ENCODE measurements at regions of chr16 and their contacts with region 1.

Region 1: DNA sequence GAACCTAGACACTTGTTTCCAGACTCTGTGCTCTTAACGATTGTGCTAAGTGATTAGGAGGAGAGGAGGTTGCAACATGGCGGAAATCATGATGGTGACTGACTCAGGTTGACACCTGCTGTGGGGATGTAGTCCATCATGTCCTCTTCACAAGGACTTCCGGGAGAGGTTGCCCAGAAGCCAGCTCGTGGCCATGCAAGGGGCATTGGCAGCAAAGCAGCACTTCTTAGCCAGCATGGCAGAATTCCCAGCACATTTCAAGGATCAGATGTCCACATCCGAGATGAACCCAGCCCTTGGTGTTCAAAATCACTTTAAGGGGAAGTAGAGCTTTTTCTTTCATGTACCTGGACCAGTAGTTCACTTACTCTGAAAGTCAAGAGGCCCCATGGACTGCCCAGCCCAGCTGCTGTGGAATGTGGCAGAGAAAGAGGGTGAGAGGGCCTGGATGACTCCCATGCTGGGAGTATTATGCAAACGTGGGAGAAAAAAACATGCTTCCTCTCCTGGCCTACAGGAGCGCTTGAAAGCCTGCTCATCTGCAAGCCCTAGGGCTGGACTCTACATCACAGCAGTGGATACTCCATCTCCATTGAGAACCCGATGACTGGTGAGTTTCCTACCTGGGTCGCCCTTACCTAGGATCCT is 65.5 kb downstream of the IRX6 start:
- DNase-seq: peak in 1 of 2 donors; percentile 37
- H3K4me3 ChIP-seq: no peak overlapping the region
- H3K27ac ChIP-seq: no peak overlapping the region
- H3K4me1 ChIP-seq: no peaks in the 10 kb centered on the region
- H3K27me3 ChIP-seq: no peaks in the 10 kb centered on the region
- CTCF ChIP-seq: no peak
- POLR2A ChIP-seq: no peak

Region 2: DNA sequence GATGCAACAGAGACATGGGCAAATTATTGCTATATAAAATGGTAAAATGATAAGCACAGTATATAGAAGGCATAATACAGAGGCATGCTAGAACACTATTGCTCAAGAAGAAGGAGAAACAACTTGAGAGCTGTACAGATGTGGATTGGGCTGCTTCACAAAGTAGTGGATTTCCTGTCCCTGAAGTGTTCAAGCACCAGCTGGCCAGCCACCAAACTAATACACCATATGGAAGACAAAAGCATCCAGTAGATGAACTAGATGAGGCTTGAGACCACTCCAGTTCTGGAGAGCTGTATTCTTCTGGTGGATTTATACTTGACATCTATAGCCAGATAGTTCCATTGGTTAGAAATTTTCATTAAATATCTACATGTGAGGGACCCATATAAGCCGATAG is 667.6 kb after region 1 on chr16:
- intact Hi-C with region 1: loop called (anchors 10 kb)
- DNase-seq: no peak
- H3K4me3 ChIP-seq: no peak overlapping the region
- H3K27ac ChIP-seq: no peak overlapping the region
- H3K4me1 ChIP-seq: no peaks in the 10 kb centered on the region
- H3K27me3 ChIP-seq: no peaks in the 10 kb centered on the region
- CTCF ChIP-seq: no peak
- POLR2A ChIP-seq: no peak

Measured in breast epithelium (tissue), 4 donors.